SK-N-SH (cell line): ENCODE measurements at regions of chr10 and their contacts with region 1.

Region 1: GRCh38 chr10:88835096-88835909 is 16.3 kb downstream of the ANKRD22 start:
- DNase-seq: peak; percentile 64
- H3K4me3 ChIP-seq: no peak overlapping the region
- H3K27ac ChIP-seq: no peak overlapping the region
- H3K4me1 ChIP-seq: peaks cover 0 to 2% of the 10 kb centered on the region in 2 experiments; a peak in 1 of 4 replicates
- H3K27me3 ChIP-seq: no peaks in the 10 kb centered on the region
- CTCF ChIP-seq: peak; percentile 94
- EP300 ChIP-seq: no peak
- RAD21 ChIP-seq: peak; percentile 99

Region 2: GRCh38 chr10:88721392-88721791 is 113.9 kb before region 1 on chr10:
- CTCF ChIA-PET with region 1: no interaction called
- POLR2A ChIA-PET with region 1: no interaction called
- DNase-seq: no peak
- H3K4me3 ChIP-seq: no peak overlapping the region
- H3K27ac ChIP-seq: no peak overlapping the region
- H3K4me1 ChIP-seq: no peaks in the 10 kb centered on the region
- H3K27me3 ChIP-seq: no peaks in the 10 kb centered on the region
- CTCF ChIP-seq: no peak
- EP300 ChIP-seq: no peak
- RAD21 ChIP-seq: no peak

Region 3: GRCh38 chr10:88744002-88744401 is 91.3 kb before region 1 on chr10:
- CTCF ChIA-PET with region 1: no interaction called
- POLR2A ChIA-PET with region 1: no interaction called
- DNase-seq: no peak
- H3K4me3 ChIP-seq: no peak overlapping the region
- H3K27ac ChIP-seq: no peak overlapping the region
- H3K4me1 ChIP-seq: no peaks in the 10 kb centered on the region
- H3K27me3 ChIP-seq: no peaks in the 10 kb centered on the region
- CTCF ChIP-seq: no peak
- EP300 ChIP-seq: no peak
- RAD21 ChIP-seq: no peak

Region 4: DNA sequence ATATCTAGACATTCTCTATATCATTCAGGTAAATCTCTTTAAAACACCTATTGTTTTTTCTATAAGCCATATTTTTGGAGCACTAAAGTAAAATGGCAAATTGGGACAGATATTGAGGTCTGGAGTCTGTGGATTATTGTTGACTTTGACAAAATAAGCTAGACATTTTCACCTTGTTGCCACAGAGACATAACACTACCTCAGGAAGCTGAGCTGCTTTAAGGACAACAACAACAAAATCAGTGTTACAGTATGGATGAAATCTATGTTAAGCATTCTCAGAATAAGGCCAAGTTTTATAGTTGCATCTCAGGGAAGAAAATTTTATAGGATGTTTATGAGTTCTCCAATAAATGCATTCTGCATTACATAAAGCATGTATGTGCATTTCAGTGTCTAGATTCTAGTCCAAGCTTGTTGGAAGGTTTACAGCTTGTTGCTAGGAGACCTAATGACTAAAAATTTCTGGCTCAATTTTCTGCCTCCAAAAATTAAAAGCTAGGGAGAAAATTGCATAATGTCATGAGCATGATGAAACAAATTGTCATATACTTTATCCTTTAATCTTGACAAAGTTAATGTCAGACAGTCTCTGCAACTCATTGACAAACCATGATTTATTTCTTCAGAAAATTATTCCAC is 14.4 kb before region 1 on chr10:
- CTCF ChIA-PET with region 1: interaction called, 31 read pairs
- POLR2A ChIA-PET with region 1: no interaction called
- DNase-seq: no peak
- H3K4me3 ChIP-seq: no peak overlapping the region
- H3K27ac ChIP-seq: peak overlapping the region in 1 of 2 experiments; percentile 30; a peak in 1 of 4 replicates
- H3K4me1 ChIP-seq: peaks cover 0 to 7% of the 10 kb centered on the region in 2 experiments; a peak in 1 of 4 replicates
- H3K27me3 ChIP-seq: no peaks in the 10 kb centered on the region
- CTCF ChIP-seq: no peak
- EP300 ChIP-seq: no peak
- RAD21 ChIP-seq: no peak

Region 5: DNA sequence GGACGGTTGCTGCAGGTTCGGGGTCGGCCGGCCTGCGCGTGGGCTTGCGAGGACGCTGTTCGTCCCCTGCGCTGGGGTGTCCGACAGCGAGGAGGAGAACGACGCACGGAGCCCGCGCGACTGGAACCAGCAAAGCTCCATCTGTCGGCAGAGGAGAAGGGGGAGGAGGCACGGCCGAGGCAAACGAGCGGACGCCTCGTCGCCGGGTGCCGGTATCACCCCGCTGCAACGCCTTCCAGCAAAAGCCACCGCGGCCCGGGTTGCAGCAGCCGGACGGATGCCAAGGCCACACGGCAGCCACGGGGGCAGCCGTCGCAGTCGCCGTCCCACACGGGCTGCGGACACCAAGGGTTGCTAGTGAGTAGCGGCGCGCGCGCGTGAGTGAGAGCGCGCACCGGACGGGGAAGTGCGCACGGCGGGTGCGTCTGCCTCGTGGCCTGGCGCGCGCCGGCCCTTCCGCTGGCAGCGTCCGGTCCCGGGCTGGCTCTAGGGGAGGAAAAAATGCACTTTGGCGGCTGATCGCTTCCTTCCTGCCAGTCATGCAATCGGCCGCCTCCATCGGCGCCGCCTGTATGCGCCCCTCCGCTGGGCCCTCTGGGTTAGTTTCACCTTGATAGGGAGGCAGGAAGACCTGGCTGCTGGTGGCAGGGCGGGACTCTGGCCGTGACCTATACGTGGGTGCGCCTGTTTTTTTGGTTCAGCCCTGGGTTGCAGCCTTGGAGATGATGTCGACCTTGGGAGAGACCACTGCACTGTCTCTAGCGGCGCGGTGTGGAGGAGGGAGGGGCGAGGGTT is 45.2 kb after region 1 on chr10:
- CTCF ChIA-PET with region 1: interaction called, 12 read pairs
- POLR2A ChIA-PET with region 1: no interaction called
- DNase-seq: peak; percentile 87
- H3K4me3 ChIP-seq: peak overlapping the region; percentile 79 to 89
- H3K27ac ChIP-seq: peak overlapping the region; percentile 91 to 96
- H3K4me1 ChIP-seq: peaks cover 20 to 30% of the 10 kb centered on the region in 2 experiments; a peak in 3 of 4 replicates
- H3K27me3 ChIP-seq: no peaks in the 10 kb centered on the region
- CTCF ChIP-seq: peak; percentile 38; the same call in 1 of the 2 replicates
- EP300 ChIP-seq: peak in 1 of 2 experiments; percentile 37; a peak in 1 of 4 replicates
- RAD21 ChIP-seq: no peak

Region 6: GRCh38 chr10:88923520-88923919 is 88.2 kb after region 1 on chr10:
- CTCF ChIA-PET with region 1: interaction called, 425 read pairs
- POLR2A ChIA-PET with region 1: no interaction called
- DNase-seq: no peak
- H3K4me3 ChIP-seq: no peak overlapping the region
- H3K27ac ChIP-seq: peak overlapping the region; percentile 57 to 62
- H3K4me1 ChIP-seq: peaks cover 18 to 19% of the 10 kb centered on the region in 2 experiments; a peak in 3 of 4 replicates
- H3K27me3 ChIP-seq: no peaks in the 10 kb centered on the region
- CTCF ChIP-seq: no peak
- EP300 ChIP-seq: no peak
- RAD21 ChIP-seq: no peak

Region 7: DNA sequence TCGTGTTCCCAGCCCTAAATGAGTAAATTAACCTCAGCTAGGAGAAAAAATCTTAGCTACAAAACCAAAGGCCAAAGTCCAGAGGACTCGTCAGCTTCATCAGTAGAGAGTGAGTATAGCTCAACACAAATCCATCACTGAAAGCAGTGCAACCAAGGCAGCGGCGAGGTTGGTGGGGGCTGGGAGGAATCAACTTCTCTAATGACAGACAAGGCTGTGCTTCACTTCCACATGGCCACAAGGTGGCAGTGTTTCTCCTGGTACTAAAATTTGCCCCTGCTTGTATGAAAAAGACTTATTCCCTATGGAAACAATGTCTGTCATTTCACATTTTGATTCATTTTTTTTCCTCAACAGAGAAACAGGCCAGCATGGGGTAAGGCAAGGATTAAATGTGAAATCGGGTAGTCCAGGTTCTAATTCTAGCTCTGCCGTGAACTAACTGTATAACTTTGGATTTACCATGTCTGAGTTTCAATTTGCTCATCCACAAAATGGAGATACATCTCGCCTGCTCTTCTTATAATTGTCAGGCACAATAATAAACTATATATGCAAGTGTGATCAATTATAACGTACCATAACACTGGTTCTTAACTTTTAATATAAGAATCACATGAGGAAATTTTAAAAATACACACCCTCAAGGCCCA is 194.6 kb after region 1 on chr10:
- CTCF ChIA-PET with region 1: interaction called, 12 read pairs
- POLR2A ChIA-PET with region 1: no interaction called
- DNase-seq: peak; percentile 60
- H3K4me3 ChIP-seq: no peak overlapping the region; a peak in 1 of 4 replicates
- H3K27ac ChIP-seq: no peak overlapping the region
- H3K4me1 ChIP-seq: peaks cover 7 to 14% of the 10 kb centered on the region in 2 experiments; a peak in 3 of 4 replicates
- H3K27me3 ChIP-seq: no peaks in the 10 kb centered on the region
- CTCF ChIP-seq: peak; percentile 91
- EP300 ChIP-seq: no peak
- RAD21 ChIP-seq: peak; percentile 94